Activated T-helper 2 cell treated with anti-CD3 and anti-CD28 coated beads, Interferon-gamma antibody, Interleukin-2, Interleukin-4, amounts not matched to agents 10 μg/mL and 5 μg/mL and 100 μg/mL, durations not matched to agents 14 hours and 24 hours and 36 hours (primary cell): ENCODE measurements at regions of chr1 and their contacts with region 1.

Region 1: DNA sequence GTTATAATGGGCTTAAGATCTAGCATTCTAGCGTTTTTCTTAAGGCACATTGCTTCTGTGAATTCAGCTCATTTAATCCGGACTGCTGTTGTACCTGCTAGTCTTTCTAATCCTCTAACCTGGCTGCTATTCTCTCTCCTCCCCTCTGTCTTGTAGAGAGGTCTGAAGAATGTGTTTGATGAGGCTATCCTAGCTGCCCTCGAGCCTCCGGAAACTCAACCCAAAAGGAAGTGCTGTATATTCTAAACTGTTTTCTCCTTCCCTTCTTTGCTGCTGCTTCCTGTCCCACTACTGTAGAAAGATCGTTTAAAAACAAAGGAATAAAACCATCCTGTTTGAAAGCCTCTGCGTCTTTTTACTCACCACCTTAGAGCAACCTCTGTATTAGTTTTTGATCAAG is 37.3 kb downstream of the CDC42 start:
- DNase-seq: no peak
- H3K4me3 Mint-ChIP-seq: peak overlapping the region; percentile 65
- H3K27ac Mint-ChIP-seq: peak overlapping the region; percentile 67
- H3K4me1 Mint-ChIP-seq: peaks cover 71% of the 10 kb centered on the region
- H3K27me3 Mint-ChIP-seq: no peaks in the 10 kb centered on the region

Region 2: GRCh38 chr1:22075718-22076117 is 14.1 kb before region 1 on chr1:
- intact Hi-C with region 1: loop called (anchors 2 kb)
- DNase-seq: no peak
- H3K4me3 Mint-ChIP-seq: no peak overlapping the region
- H3K27ac Mint-ChIP-seq: peak overlapping the region; percentile 60
- H3K4me1 Mint-ChIP-seq: peaks cover 62% of the 10 kb centered on the region
- H3K27me3 Mint-ChIP-seq: no peaks in the 10 kb centered on the region